ENCODE measurements at regions of chr4 and their contacts with region 1.

Region 1: GRCh38 chr4:82652062-82652461 is 90.3 kb upstream of the TMEM150C start:
- DNase-seq: peak; percentile 51
- ATAC-seq: peak; percentile 85
- H3K4me3 ChIP-seq: no peak overlapping the region
- H3K27ac ChIP-seq: no peak overlapping the region
- H3K4me1 ChIP-seq: peaks cover 16% of the 10 kb centered on the region
- H3K27me3 ChIP-seq: no peaks in the 10 kb centered on the region
- CTCF ChIP-seq: no peak

Region 2: GRCh38 chr4:82084747-82085146 is 567.3 kb before region 1 on chr4:
- CTCF ChIA-PET with region 1: no interaction called
- POLR2A ChIA-PET with region 1: no interaction called
- intact Hi-C with region 1: no loop called
- DNase-seq: no peak
- ATAC-seq: no peak
- H3K4me3 ChIP-seq: no peak overlapping the region
- H3K27ac ChIP-seq: no peak overlapping the region
- H3K4me1 ChIP-seq: no peaks in the 10 kb centered on the region
- H3K27me3 ChIP-seq: peaks cover 7% of the 10 kb centered on the region; the same call in 1 of the 2 replicates
- CTCF ChIP-seq: no peak

Region 3: GRCh38 chr4:82491251-82491960 is 160.7 kb before region 1 on chr4:
- CTCF ChIA-PET with region 1: no interaction called
- POLR2A ChIA-PET with region 1: interaction called, 10 read pairs
- intact Hi-C with region 1: no loop called
- DNase-seq: peak; percentile 42
- ATAC-seq: no peak
- H3K4me3 ChIP-seq: no peak overlapping the region
- H3K27ac ChIP-seq: no peak overlapping the region
- H3K4me1 ChIP-seq: no peaks in the 10 kb centered on the region
- H3K27me3 ChIP-seq: no peaks in the 10 kb centered on the region
- CTCF ChIP-seq: no peak